Activated naive CD8-positive, alpha-beta T cell treated with anti-CD3 and anti-CD28 coated beads, Interleukin-2, amount 10 ng/mL, durations not matched to agents 7 days and 5 days (primary cell): ENCODE measurements at regions of chr3 and their contacts with region 1.

Region 1: DNA sequence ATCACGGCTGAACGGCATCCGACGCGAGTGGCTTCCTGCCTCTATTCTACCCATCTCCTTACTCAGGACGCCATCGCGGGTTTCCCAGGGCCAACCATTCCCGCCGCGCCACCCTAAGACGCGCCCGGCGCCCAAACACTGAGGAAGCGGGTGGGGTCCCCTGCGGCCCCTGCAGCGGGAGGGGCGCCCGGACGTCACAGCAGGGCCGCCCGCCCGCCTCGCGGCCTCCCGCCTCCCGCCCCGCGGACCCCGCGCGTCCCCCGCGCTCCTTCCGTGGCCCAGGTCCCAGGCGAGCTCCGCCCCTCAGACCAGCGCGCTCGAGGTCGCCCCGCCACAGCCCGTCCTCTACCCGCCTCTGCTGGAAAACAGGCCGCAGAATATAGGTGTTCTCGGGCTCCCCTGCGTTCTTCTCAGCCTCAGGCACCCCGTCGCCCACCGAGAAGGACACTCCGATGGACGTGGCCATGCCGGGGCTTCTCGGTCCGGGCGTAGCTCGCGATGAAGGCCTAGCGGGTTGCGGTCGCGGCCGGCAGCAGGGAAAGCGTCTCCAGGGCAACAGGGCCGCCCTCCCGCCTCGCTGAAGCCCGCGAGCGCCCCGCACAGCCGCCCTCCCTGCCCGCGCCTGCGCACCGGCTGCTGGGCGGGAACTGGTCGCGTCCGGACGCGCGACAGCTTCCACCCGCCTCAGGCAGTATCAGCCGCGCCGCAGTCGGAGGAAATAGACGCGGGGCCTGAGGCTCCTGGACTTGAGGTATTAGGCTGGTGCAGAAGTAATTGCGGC is at the start of gene DYNLT2B:
- DNase-seq: peak; percentile 92
- ATAC-seq: peak; percentile 88
- H3K4me3 Mint-ChIP-seq: peak within 1 kb of the TSS; percentile 93
- H3K27ac Mint-ChIP-seq: peak within 1 kb of the TSS; percentile 97
- H3K4me1 Mint-ChIP-seq: peaks cover 6% of the 10 kb centered on the region
- H3K27me3 Mint-ChIP-seq: no peaks in the 10 kb centered on the region
- total RNA-seq, gene DYNLT2B: 15.4 to 18.9 TPM

Region 2: DNA sequence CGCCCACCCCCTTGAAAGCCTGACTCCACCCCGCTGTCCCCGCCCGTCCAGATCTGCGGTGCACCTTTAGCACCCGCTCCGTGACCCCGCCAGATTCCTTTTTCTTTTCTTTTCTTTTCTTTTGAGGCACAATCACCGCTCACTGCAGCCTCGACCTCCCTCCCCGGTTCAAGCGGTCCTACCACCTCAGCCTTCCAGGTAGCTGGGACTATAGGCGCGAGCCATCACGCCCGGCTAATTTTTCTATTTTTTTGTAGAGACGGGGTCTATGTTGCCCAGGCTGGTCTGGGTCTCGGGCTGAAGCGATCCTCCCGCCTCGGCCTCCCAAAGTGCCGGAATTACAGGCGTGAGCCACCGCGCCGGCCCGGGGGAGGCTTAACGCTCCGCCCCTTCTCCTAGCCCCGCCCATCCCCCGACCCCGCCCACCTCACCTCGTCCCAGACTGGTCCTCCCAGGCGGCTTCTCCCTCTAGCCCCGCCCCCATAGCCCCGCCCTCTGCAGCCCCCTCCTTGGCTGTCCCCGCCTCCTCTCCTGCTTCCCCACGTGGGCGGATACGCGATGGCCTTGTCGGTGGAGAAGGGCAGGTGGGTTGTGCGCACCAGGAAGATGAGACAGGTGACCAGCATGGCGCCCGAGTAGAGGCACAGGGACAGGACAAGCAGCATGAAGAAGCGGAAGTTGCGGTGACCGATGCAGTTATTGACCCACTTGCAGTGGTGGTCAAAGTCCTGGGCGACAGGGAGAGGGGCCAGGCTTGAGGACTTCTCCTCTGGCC is 109.9 kb before region 1 on chr3:
- POLR2A ChIA-PET with region 1: no interaction called
- DNase-seq: peak; percentile 60
- ATAC-seq: peak; percentile 72
- H3K4me3 Mint-ChIP-seq: peak overlapping the region; percentile 86
- H3K27ac Mint-ChIP-seq: peak overlapping the region; percentile 66
- H3K4me1 Mint-ChIP-seq: peaks cover 10% of the 10 kb centered on the region
- H3K27me3 Mint-ChIP-seq: peaks cover 24% of the 10 kb centered on the region

Region 3: DNA sequence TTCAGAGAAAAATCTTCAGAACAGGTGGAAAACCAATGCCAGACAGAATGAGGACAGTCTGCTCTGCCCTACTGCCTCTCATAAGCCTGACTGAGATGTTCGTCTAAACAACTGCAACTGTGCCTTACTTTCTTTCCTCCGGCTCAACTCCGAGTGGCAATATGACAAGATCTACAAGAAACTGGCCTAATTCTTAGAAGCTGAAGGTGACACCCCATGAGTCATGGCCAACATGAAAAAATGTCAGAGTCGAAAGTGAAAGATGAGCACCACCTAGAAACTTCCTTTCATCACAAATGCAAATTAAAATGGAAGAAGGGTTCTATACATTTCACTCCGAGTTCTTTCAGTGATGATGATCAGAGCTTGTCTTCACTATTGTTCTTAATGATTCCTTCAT is 43.3 kb before region 1 on chr3:
- POLR2A ChIA-PET with region 1: interaction called, 26 read pairs
- DNase-seq: no peak
- ATAC-seq: peak; percentile 98
- H3K4me3 Mint-ChIP-seq: peak overlapping the region; percentile 80
- H3K27ac Mint-ChIP-seq: peak overlapping the region; percentile 90
- H3K4me1 Mint-ChIP-seq: peaks cover 36% of the 10 kb centered on the region
- H3K27me3 Mint-ChIP-seq: no peaks in the 10 kb centered on the region

Region 4: GRCh38 chr3:196280689-196281440 is 37.0 kb before region 1 on chr3:
- POLR2A ChIA-PET with region 1: interaction called, 26 read pairs
- DNase-seq: no peak
- ATAC-seq: peak; percentile 80
- H3K4me3 Mint-ChIP-seq: peak overlapping the region; percentile 49
- H3K27ac Mint-ChIP-seq: peak overlapping the region; percentile 64
- H3K4me1 Mint-ChIP-seq: peaks cover 50% of the 10 kb centered on the region
- H3K27me3 Mint-ChIP-seq: no peaks in the 10 kb centered on the region

Region 5: GRCh38 chr3:196298521-196298920 is 19.4 kb before region 1 on chr3:
- POLR2A ChIA-PET with region 1: no interaction called
- DNase-seq: no peak
- ATAC-seq: no peak
- H3K4me3 Mint-ChIP-seq: no peak overlapping the region
- H3K27ac Mint-ChIP-seq: no peak overlapping the region
- H3K4me1 Mint-ChIP-seq: no peaks in the 10 kb centered on the region
- H3K27me3 Mint-ChIP-seq: no peaks in the 10 kb centered on the region

Region 6: GRCh38 chr3:196432137-196432879 is 114.4 kb after region 1 on chr3 and contains the start of gene UBXN7:
- POLR2A ChIA-PET with region 1: interaction called, 12 read pairs
- DNase-seq: peak; percentile 97
- ATAC-seq: peak; percentile 92
- H3K4me3 Mint-ChIP-seq: peak within 1 kb of the TSS; percentile 85
- H3K27ac Mint-ChIP-seq: peak within 1 kb of the TSS; percentile 97
- H3K4me1 Mint-ChIP-seq: peaks cover 14% of the 10 kb centered on the region
- H3K27me3 Mint-ChIP-seq: peaks cover 3% of the 10 kb centered on the region
- total RNA-seq, gene UBXN7: 62.2 to 62.6 TPM

Region 7: DNA sequence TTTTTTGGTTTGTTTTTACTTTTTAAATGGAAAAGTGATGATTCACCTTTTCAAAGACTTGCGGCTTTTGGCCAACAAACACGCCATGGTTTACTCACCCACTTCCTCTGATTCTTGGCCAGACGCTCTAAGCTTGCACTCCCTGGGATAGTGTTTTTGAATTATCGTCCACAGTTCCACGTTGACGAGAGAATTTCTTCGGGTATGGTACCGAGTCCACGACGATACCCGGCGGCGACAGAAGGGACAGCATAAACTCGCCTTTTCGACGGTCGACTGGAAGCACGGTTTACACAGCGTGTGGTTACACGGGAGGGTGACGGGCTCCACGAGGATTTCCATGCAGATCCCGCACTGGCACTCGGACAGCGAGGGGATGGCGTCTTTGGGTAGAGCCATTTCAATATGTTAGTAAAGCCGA is 184.9 kb after region 1 on chr3:
- POLR2A ChIA-PET with region 1: interaction called, 21 read pairs
- DNase-seq: peak; percentile 66
- ATAC-seq: peak; percentile 32
- H3K4me3 Mint-ChIP-seq: peak overlapping the region; percentile 99
- H3K27ac Mint-ChIP-seq: peak overlapping the region; percentile 97
- H3K4me1 Mint-ChIP-seq: peaks cover 28% of the 10 kb centered on the region
- H3K27me3 Mint-ChIP-seq: no peaks in the 10 kb centered on the region

Region 8: DNA sequence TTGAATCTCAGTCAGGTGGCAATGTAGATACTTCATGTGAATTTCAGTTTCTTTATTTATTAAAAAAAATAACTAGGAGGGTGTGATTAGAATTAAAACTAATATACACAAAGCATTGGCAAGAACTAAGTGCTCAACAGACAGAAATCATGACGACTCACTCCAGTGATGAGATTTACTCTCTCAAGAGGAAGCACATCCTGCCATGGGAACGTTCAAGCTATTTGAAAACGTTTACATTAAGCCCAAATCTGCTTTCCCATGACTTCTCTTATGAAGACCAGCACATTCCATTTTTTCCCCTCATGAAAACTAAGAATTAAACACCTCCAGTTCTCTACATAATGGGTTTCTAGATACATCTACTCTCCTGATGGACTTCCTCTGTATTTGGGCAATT is 241.9 kb after region 1 on chr3:
- POLR2A ChIA-PET with region 1: no interaction called
- DNase-seq: no peak
- ATAC-seq: no peak
- H3K4me3 Mint-ChIP-seq: no peak overlapping the region
- H3K27ac Mint-ChIP-seq: no peak overlapping the region
- H3K4me1 Mint-ChIP-seq: peaks cover 22% of the 10 kb centered on the region
- H3K27me3 Mint-ChIP-seq: no peaks in the 10 kb centered on the region